Psoas muscle (tissue), 8 donors: ENCODE measurements at regions of chr7 and their contacts with region 1.

Region 1: DNA sequence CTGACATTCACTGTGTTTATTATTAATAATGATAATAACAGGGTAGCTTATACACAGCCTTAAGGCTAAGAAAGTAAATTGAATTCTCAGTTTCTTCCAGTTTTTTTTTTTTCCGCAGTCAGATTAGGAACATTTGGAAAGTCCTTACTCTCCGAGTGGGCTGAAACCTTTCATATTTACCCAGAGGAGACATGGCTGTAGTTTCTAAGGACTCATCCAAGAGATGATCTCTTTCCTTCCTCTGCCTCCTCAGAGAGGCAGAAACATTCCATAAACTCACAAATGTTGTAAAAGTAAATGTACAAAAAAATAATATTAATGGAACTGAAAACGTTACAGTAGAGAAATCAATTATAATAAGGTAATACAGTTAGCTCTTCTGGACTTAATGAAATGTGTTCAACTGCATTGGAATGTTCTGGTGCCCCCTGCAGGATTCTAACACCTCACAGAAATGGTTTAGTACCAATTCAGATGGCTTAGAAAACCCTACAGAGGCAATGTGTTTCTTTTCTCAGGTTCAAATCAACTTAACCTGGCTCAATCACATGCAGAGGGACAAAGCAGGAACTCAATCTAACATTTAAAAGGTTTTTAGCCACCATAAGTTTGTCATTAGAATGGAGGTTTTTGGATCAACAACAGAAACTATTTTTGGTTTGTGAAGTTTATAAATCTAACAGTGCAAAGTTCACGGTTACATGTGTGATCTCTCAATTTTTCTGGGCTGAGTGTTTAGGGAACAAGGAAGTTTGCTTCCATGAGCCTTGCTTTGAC is 71.7 kb downstream of the ICA1 start:
- DNase-seq: no peak
- ATAC-seq: peak in 3 of 4 donors; percentile 65 to 94 (median 80)
- H3K4me3 ChIP-seq: no peak overlapping the region
- H3K27ac ChIP-seq: no peak overlapping the region
- H3K4me1 ChIP-seq: peaks cover 9% of the 10 kb centered on the region
- H3K27me3 ChIP-seq: no peaks in the 10 kb centered on the region
- CTCF ChIP-seq: peak; percentile 75

Region 2: DNA sequence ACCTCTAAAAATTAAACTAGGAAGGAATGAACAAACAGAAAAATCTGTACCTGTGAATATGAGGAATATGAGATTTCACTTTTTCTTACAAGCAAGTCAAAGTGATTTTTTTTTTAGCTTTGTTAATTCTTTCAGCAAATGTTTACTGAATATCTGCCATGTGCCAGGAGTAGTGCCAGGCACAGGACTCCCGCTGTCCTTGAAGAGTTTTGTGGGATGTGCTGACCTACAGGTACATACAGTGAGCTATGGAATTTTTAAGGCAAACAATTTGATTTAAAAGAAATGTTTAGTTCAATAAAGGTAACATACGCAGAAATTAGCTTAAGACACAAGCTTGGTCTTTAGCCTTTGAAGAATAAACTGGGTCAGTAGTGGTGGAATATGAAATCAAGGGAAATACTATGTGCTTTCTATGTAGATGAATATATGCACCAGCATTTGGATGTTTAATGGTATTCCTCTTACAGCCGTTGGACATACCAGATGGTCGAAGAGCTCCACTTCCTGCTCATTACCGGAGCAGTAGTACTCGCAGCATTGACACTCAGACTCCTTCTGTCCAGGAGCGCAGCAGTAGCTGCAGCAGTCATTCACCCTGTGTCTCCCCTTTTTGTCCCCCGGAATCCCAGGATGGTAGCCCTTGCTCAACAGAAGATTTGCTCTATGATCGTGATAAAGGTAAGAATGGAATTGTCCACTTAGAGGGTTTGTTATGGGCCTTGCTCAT is 119.7 kb before region 1 on chr7:
- intact Hi-C with region 1: loop called (anchors 10 kb)
- DNase-seq: no peak
- ATAC-seq: no peak
- H3K4me3 ChIP-seq: no peak overlapping the region
- H3K27ac ChIP-seq: no peak overlapping the region
- H3K4me1 ChIP-seq: peaks cover 10% of the 10 kb centered on the region
- H3K27me3 ChIP-seq: no peaks in the 10 kb centered on the region
- CTCF ChIP-seq: no peak

Region 3: GRCh38 chr7:8143151-8143874 is 47.0 kb before region 1 on chr7:
- intact Hi-C with region 1: loop called in 1 of 2 experiments (anchors 1 kb)
- DNase-seq: peak in 1 of 2 donors; percentile 74
- ATAC-seq: peak; percentile 87 to 98 (median 96)
- H3K4me3 ChIP-seq: no peak overlapping the region
- H3K27ac ChIP-seq: no peak overlapping the region
- H3K4me1 ChIP-seq: peaks cover 8% of the 10 kb centered on the region
- H3K27me3 ChIP-seq: no peaks in the 10 kb centered on the region
- CTCF ChIP-seq: no peak

Region 4: GRCh38 chr7:8413600-8413999 is 223.3 kb after region 1 on chr7:
- intact Hi-C with region 1: no loop called
- DNase-seq: no peak
- ATAC-seq: no peak
- H3K4me3 ChIP-seq: no peak overlapping the region
- H3K27ac ChIP-seq: no peak overlapping the region
- H3K4me1 ChIP-seq: no peaks in the 10 kb centered on the region
- H3K27me3 ChIP-seq: no peaks in the 10 kb centered on the region
- CTCF ChIP-seq: no peak